Activated CD4-positive, alpha-beta T cell treated with anti-CD3 and anti-CD28 coated beads, Interleukin-2, amount 10 ng/mL, durations not matched to agents 24 days and 14 days (primary cell): ENCODE measurements at regions of chr3 and their contacts with region 1.

Region 1: DNA sequence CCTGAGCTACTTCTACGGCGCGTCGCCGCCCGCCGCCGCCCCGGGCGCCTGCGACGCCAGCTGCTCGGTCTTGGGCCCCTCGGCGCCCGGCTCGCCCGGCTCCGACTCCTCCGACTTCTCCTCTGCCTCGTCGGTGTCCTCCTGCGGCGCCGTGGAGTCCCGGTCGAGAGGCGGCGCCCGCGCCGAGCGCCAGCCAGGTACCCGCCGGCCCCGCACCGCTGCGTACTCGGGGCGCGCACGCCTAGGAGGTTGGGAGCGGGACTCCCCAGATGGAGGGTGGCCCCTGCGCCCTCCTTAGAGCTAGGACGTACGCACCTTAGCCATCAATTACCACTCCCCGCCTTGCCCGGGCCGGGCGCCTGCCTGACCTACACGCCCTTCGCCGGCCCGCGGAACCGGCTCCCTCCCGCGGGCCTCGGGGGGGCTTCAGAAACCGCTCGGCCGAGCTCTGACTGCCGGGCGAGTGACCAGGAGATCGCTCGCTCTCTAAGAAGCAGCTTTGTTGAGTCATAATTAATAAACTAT is 469 bp downstream of the NFKBIZ start:
- DNase-seq: peak; percentile 88
- H3K4me3 Mint-ChIP-seq: peak overlapping the region; percentile 97
- H3K27ac Mint-ChIP-seq: peak overlapping the region; percentile 100
- H3K4me1 Mint-ChIP-seq: peaks cover 53% of the 10 kb centered on the region
- H3K27me3 Mint-ChIP-seq: no peaks in the 10 kb centered on the region

Region 2: DNA sequence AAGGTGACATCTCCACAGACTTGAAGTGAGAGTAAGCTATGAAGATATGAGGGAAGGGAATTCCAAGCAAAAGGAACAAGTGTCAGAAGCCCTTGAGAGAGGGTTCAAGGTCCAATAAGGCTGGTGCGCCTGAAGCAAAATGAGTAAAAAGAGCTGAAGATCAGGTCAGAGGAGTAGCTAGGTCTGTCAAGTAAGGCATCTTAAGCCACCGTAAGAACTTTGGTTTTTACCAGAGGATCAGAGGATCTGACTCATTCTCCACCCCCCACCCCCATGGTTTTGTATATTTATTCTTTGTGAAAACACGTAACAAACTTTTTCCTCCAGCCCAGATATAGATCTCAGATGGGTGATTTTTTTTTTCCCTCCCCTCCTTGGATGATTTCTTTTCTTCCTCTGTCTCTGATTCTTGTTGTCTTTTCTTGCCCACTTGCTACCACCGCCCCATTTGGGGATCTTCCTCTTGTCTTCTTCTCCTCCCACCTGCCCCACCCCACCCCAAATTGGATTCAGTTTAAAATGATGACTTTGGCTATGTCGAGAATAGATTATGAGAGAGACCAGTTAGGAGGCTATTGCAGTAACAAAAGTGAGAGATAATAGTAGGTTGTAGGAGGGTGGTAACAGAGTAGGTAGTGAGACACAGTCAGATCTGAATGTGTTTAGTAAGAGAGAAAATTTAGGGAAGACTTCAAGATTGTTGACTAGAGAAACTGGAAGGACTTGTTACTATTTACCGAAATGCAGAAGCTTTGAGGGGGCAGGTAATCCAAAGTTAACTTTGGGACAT is 282.1 kb before region 1 on chr3:
- intact Hi-C with region 1: loop called (anchors 2 kb)
- DNase-seq: no peak
- H3K4me3 Mint-ChIP-seq: peak overlapping the region; percentile 69
- H3K27ac Mint-ChIP-seq: peak overlapping the region; percentile 96
- H3K4me1 Mint-ChIP-seq: peaks cover 56% of the 10 kb centered on the region
- H3K27me3 Mint-ChIP-seq: no peaks in the 10 kb centered on the region

Region 3: GRCh38 chr3:101724329-101725193 is 125.2 kb before region 1 on chr3 and contains the start of gene CEP97:
- intact Hi-C with region 1: loop called (anchors 1 kb)
- DNase-seq: peak; percentile 96
- H3K4me3 Mint-ChIP-seq: peak within 1 kb of the TSS; percentile 95
- H3K27ac Mint-ChIP-seq: peak within 1 kb of the TSS; percentile 97
- H3K4me1 Mint-ChIP-seq: peaks cover 35% of the 10 kb centered on the region
- H3K27me3 Mint-ChIP-seq: no peaks in the 10 kb centered on the region
- total RNA-seq, gene CEP97: 20.3 and 22.8 TPM in 2 replicates

Region 4: GRCh38 chr3:101809178-101810021 is 40.4 kb before region 1 on chr3:
- intact Hi-C with region 1: loop called (anchors 1 kb)
- DNase-seq: peak; percentile 80
- H3K4me3 Mint-ChIP-seq: no peak overlapping the region
- H3K27ac Mint-ChIP-seq: peak overlapping the region; percentile 36
- H3K4me1 Mint-ChIP-seq: peaks cover 37% of the 10 kb centered on the region
- H3K27me3 Mint-ChIP-seq: no peaks in the 10 kb centered on the region

Region 5: DNA sequence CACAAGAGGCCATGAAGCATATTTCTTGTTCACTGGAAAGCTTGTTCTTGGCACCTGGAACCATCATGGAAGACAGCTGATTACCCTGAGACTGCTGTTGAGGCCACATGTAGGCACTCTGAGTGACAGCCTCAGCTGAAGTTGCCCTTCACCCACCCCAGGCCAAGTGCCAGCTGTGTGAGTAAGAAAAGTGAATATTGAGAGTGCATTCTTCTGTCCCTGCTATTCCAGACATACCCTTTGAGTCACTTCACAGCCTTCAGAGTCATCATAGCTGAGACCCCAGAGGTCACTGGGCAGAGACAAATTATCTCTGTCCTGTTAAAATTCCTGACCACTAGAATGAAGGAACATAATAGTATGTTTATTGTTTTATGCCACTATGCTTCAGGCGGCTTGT is 79.1 kb after region 1 on chr3:
- intact Hi-C with region 1: loop called (anchors 5 kb)
- DNase-seq: no peak
- H3K4me3 Mint-ChIP-seq: no peak overlapping the region
- H3K27ac Mint-ChIP-seq: no peak overlapping the region
- H3K4me1 Mint-ChIP-seq: peaks cover 25% of the 10 kb centered on the region
- H3K27me3 Mint-ChIP-seq: peaks cover 11% of the 10 kb centered on the region

Region 6: DNA sequence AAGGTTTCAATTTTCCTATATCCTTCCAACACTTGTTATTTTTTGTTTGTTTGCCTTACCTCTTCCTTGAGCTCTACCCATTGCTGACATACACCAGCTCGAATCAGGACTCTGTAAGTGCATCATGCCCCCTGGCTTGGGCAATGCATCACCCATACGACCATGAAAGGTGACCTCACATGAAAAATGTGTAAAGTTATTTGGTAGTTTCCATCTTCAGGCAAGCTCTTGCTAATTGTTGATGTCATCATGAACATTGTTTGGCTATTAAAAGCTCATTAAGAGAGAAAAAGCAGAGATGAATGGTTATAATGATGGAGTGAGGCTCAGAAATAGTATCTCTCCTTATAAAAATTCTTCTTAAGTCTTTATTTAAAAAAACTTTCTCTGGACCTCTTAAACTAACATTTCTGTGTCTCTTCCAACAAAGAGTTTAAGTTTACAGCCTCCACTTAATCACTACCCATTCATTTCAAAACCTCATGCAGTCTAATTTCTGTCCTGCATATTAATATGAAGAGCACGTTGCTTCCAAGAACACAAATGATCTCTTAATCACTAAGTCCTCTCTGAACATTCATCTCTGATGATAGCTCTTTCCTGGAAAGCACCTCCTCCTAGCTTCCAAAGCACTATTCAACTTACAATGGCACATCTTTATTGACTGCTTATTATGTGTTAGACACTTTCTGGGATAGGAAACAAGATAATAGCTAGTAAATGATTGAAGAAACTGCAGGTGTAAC is 235.8 kb after region 1 on chr3:
- intact Hi-C with region 1: loop called (anchors 2 kb)
- DNase-seq: peak; percentile 55
- H3K4me3 Mint-ChIP-seq: peak overlapping the region; percentile 4
- H3K27ac Mint-ChIP-seq: peak overlapping the region; percentile 62
- H3K4me1 Mint-ChIP-seq: peaks cover 22% of the 10 kb centered on the region
- H3K27me3 Mint-ChIP-seq: peaks cover 4% of the 10 kb centered on the region